ENCODE measurements at regions of chr1 and their contacts with region 1.

Region 1: DNA sequence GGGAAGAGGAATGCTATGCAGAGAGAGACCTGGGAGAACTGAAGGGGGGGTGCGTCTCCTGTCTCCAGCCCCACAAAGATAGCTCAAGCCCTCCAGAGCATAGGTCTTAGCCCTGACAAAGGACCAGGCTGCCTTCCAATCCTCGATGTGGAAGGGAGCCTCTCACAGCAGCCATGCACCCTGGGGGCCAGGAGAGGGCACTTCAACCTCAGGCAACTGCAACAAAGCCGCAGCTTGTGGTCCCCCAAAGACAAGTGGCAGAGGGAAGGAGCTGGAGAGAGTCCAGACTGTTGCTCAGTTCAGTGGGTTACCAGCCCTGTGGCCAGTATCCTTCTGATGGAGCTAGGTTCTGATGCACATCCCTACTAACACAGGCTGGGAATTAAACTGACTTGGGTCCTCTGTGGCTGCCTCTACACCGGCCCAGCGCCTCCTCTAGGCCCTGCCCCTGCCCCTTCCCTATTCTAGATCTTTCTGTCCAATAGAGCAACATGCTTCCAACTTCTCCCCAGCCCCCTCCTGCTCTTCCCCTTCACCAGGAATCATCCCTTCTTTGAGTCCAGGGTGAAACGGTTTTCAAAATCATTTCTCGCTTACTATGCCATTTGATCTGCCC is 100.8 kb upstream of the SPATA6 start:
- DNase-seq: peak; percentile 10
- H3K4me3 Mint-ChIP-seq: no peak overlapping the region
- H3K27ac Mint-ChIP-seq: no peak overlapping the region
- H3K4me1 Mint-ChIP-seq: no peaks in the 10 kb centered on the region
- H3K27me3 Mint-ChIP-seq: no peaks in the 10 kb centered on the region

Region 2: GRCh38 chr1:48556186-48556850 is 16.4 kb before region 1 on chr1:
- CTCF ChIA-PET with region 1: no interaction called
- POLR2A ChIA-PET with region 1: no interaction called
- intact Hi-C with region 1: no loop called
- DNase-seq: no peak
- H3K4me3 Mint-ChIP-seq: no peak overlapping the region
- H3K27ac Mint-ChIP-seq: no peak overlapping the region
- H3K4me1 Mint-ChIP-seq: no peaks in the 10 kb centered on the region
- H3K27me3 Mint-ChIP-seq: peaks cover 3% of the 10 kb centered on the region

Region 3: GRCh38 chr1:48697066-48697707 is 124.4 kb after region 1 on chr1:
- CTCF ChIA-PET with region 1: no interaction called
- POLR2A ChIA-PET with region 1: no interaction called
- intact Hi-C with region 1: loop called (anchors 2 kb)
- DNase-seq: peak; percentile 69
- H3K4me3 Mint-ChIP-seq: no peak overlapping the region
- H3K27ac Mint-ChIP-seq: no peak overlapping the region
- H3K4me1 Mint-ChIP-seq: no peaks in the 10 kb centered on the region
- H3K27me3 Mint-ChIP-seq: peaks cover 10% of the 10 kb centered on the region

Measured in activated CD4-positive, alpha-beta memory T cell treated with anti-CD3 and anti-CD28 coated beads for 36 hours (primary cell).